PC-9 (cell line): ENCODE measurements at regions of chr7 and their contacts with region 1.

Region 1: DNA sequence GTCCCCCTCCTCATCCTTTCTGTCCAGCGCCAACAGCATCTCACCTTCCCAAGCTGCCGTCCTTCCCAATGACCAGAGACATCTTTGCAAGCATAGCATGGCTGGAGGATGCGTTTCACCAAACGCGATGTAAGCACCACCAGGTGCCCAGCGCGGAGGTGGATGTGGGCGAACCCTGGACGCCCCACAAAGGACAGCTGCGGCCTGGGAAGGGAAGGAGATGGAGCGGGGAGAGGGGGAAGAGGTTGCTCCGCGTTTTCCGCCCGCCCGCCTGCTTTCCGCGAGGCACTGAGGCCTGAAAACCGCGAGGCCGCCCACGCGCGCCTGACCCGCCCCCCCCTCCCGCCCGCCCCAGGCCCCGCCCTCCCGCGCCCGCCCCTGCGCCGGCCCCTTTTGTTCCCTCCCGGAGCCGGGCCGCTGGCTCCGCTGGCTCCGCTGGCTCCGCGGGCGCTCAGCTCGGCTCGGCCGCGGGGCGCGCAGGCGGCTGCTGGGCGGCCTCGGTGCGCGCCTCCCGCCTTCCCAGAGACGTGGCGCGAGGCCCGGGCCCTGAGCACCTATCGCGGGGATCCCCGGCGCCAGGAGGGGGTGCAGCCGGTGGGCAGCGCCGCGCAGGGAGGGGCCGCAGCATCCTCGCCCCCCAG is at the start of gene CLIP2:
- DNase-seq: peak in 1 of 2 experiments; percentile 83
- H3K4me3 ChIP-seq: peak within 1 kb of the TSS; percentile 70
- H3K27ac ChIP-seq: peak within 1 kb of the TSS; percentile 13
- H3K4me1 ChIP-seq: peaks cover 42% of the 10 kb centered on the region
- H3K27me3 ChIP-seq: no peaks in the 10 kb centered on the region
- CTCF ChIP-seq: no peak
- total RNA-seq, gene CLIP2: 37.9 and 48.0 TPM in 2 replicates

Region 2: GRCh38 chr7:74026903-74027551 is 262.1 kb before region 1 on chr7:
- CTCF ChIA-PET with region 1: no interaction called
- POLR2A ChIA-PET with region 1: no interaction called
- intact Hi-C with region 1: no loop called
- DNase-seq: peak in 1 of 2 experiments; percentile 72
- H3K4me3 ChIP-seq: no peak overlapping the region
- H3K27ac ChIP-seq: no peak overlapping the region
- H3K4me1 ChIP-seq: peaks cover 12% of the 10 kb centered on the region
- H3K27me3 ChIP-seq: peaks cover 12% of the 10 kb centered on the region; the same call in 1 of the 2 replicates
- CTCF ChIP-seq: peak; percentile 95

Region 3: GRCh38 chr7:74141705-74142104 is 147.4 kb before region 1 on chr7:
- CTCF ChIA-PET with region 1: no interaction called
- POLR2A ChIA-PET with region 1: interaction called, 18 read pairs
- intact Hi-C with region 1: no loop called
- DNase-seq: peak; percentile 38 to 89
- H3K4me3 ChIP-seq: peak overlapping the region; percentile 20; the same call in 1 of the 2 replicates
- H3K27ac ChIP-seq: peak overlapping the region; percentile 100
- H3K4me1 ChIP-seq: peaks cover 30% of the 10 kb centered on the region
- H3K27me3 ChIP-seq: no peaks in the 10 kb centered on the region
- CTCF ChIP-seq: no peak

Region 4: GRCh38 chr7:74254129-74254857 is 34.8 kb before region 1 on chr7 and contains the start of gene RFC2:
- CTCF ChIA-PET with region 1: no interaction called
- POLR2A ChIA-PET with region 1: no interaction called
- intact Hi-C with region 1: loop called (anchors 5 kb)
- DNase-seq: peak; percentile 88 to 99
- H3K4me3 ChIP-seq: peak within 1 kb of the TSS; percentile 92
- H3K27ac ChIP-seq: peak within 1 kb of the TSS; percentile 67
- H3K4me1 ChIP-seq: peaks cover 17% of the 10 kb centered on the region
- H3K27me3 ChIP-seq: no peaks in the 10 kb centered on the region
- CTCF ChIP-seq: no peak
- total RNA-seq, gene RFC2: 65.5 and 75.7 TPM in 2 replicates

Region 5: DNA sequence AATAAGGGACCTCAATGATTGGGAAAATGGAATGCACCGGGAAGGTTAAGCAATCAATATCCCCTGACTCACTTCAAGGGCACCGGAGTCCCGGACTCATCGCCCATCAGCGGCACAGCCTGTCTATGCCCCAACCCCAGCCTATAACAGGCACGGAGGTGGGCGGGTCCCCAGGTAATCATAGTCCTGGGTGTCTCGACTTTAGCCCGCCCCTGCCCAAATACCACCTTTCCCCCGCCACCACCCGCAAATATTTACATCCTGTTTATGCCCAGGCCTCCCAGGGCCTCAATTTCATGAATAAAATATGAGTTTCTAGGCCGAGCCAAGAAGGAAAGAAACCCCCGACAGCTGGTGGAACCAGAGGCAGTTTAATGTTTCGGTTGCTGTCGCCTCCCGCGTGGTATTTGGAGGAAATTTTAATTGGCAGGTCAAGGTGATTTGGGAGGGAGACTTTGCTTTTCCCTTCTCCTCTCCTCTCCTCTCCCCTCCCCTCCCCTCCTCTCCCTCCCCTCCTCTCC is 19.3 kb before region 1 on chr7:
- CTCF ChIA-PET with region 1: interaction called, 6 read pairs
- POLR2A ChIA-PET with region 1: interaction called, 10 read pairs
- intact Hi-C with region 1: loop called (anchors 1 kb)
- DNase-seq: peak; percentile 66 to 76
- H3K4me3 ChIP-seq: peak overlapping the region; percentile 57
- H3K27ac ChIP-seq: no peak overlapping the region
- H3K4me1 ChIP-seq: peaks cover 18% of the 10 kb centered on the region
- H3K27me3 ChIP-seq: no peaks in the 10 kb centered on the region
- CTCF ChIP-seq: no peak

Region 6: DNA sequence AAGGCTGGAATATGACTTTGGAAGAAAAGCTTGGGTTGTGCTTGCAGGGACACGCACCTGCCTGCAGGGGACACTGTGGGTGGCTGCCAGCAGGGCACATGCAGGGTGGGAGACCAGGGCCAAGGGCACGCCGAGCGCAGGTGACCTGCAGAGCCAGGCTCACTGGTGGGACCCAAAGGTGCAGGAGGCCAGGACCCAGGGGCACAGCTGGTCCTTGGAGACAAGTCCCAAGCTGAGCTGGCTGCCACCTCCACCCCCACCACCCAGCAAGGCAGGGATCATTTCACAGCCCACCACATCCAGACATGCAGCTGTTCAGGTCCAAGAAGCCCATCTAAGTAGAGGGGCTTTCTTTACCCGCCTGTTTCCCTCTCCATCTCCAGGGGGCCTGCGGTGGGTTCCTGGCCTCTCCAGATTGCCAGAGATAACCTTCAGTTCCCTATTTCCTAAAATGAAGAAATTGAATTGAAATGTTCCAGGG is 13.7 kb before region 1 on chr7:
- CTCF ChIA-PET with region 1: interaction called, 3 read pairs
- POLR2A ChIA-PET with region 1: no interaction called
- intact Hi-C with region 1: loop called (anchors 1 kb)
- DNase-seq: no peak
- H3K4me3 ChIP-seq: no peak overlapping the region
- H3K27ac ChIP-seq: no peak overlapping the region
- H3K4me1 ChIP-seq: peaks cover 39% of the 10 kb centered on the region
- H3K27me3 ChIP-seq: no peaks in the 10 kb centered on the region
- CTCF ChIP-seq: peak; percentile 70